Dendritic cell treated with granulocyte-macrophage colony-stimulating factor and Interleukin-4, amounts not matched to agents 40 ng/mL and 50 ng/mL, for 4 days (primary cell): ENCODE measurements at regions of chr10 and their contacts with region 1.

Region 1: DNA sequence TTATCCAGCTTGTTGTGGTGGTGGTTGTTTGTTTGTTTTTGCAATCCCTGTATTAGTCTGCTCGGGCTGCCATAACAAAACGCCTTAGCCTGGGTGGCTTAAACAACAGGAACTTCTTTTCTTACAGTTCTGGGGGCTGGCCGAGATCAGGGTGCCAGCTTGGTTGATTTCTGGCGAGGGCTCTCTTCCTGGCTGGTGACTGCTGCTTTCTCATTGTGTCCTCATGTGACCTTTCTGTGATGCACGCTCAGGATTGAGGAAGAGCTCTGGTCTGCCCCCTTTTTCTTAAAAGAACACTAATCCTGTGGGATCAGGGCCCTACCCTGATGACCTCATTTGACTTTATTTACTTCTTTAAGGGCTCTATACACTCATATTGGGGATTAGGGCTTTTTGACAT is 107.1 kb upstream of the NRP1 start:
- H3K4me3 Mint-ChIP-seq: no peak overlapping the region
- H3K27ac Mint-ChIP-seq: no peak overlapping the region
- H3K4me1 Mint-ChIP-seq: peaks cover 5% of the 10 kb centered on the region
- H3K27me3 Mint-ChIP-seq: peaks cover 11% of the 10 kb centered on the region

Region 2: GRCh38 chr10:33559105-33559504 is 117.5 kb after region 1 on chr10:
- intact Hi-C with region 1: loop called (anchors 10 kb)
- H3K4me3 Mint-ChIP-seq: no peak overlapping the region
- H3K27ac Mint-ChIP-seq: no peak overlapping the region
- H3K4me1 Mint-ChIP-seq: peaks cover 12% of the 10 kb centered on the region
- H3K27me3 Mint-ChIP-seq: peaks cover 48% of the 10 kb centered on the region

Region 3: GRCh38 chr10:34333513-34333912 is 892.0 kb after region 1 on chr10:
- intact Hi-C with region 1: no loop called
- H3K4me3 Mint-ChIP-seq: no peak overlapping the region
- H3K27ac Mint-ChIP-seq: no peak overlapping the region
- H3K4me1 Mint-ChIP-seq: no peaks in the 10 kb centered on the region
- H3K27me3 Mint-ChIP-seq: no peaks in the 10 kb centered on the region